PC-9 (cell line): ENCODE measurements at regions of chr12 and their contacts with region 1.

Region 1: DNA sequence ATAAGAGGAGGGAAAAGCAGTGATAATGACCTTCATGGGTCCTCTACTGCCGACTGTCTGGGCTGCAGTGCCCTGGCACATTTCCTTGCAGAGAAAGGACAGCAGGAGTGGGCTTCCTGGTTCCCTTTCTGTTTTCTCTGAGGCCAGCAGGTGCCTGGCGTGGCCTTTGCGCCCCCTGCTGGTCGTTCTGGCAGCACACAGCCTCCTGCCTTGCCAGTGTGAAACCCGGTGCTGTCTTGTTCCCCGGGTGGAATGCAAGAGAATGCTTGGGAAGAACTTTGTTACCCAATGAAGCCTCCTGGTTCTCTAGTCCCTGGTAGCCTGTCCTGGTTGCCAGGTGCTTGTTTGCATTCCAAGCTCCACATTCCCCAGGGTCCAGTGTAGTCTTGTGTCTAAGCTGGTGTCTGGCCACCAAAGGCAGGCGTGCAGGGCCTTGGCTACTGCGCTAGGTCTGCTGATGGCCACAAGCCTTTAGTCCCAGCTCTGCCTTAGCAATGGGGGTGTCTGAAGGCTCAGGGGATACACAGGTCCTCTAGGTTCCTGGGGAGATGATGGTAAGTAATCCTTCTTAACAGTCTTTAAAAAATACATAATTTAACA is 1392.4 kb upstream of the TMEM132C start:
- DNase-seq: peak in 1 of 2 experiments; percentile 41
- H3K4me3 ChIP-seq: no peak overlapping the region
- H3K27ac ChIP-seq: no peak overlapping the region
- H3K4me1 ChIP-seq: no peaks in the 10 kb centered on the region
- H3K27me3 ChIP-seq: peaks cover 10% of the 10 kb centered on the region
- CTCF ChIP-seq: peak; percentile 84

Region 2: DNA sequence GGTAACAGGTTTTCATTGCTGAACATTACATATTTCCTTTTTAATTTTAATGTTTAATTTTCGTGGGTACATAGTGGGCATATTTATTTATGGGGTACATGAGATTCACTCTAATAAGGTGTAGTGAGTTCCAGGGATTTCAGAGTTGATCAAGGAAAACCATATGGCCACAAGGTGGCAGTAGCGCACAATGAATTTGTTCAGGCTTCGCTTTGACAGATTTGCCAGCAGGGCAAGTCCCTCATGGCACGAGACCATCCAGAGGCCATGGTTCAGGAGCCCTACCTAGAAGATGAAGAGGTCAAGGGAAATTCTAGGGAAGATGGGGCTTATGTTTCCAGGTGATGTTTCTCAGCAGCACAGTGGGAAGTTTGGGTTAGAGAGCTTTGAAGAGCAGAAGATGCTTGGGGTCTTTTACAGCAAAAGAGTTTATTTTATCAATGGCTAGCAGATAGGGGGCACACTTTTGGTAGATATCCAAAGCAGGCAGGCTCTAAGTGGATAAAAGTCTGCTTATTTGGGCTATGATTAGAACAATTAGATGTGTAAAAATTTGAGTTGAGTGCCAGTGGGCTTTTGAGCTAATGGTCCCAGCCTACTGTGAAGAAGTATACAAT is 804.9 kb before region 1 on chr12:
- CTCF ChIA-PET with region 1: no interaction called
- POLR2A ChIA-PET with region 1: no interaction called
- intact Hi-C with region 1: loop called (anchors 1 kb)
- DNase-seq: peak in 1 of 2 experiments; percentile 60
- H3K4me3 ChIP-seq: no peak overlapping the region
- H3K27ac ChIP-seq: no peak overlapping the region
- H3K4me1 ChIP-seq: no peaks in the 10 kb centered on the region
- H3K27me3 ChIP-seq: no peaks in the 10 kb centered on the region
- CTCF ChIP-seq: peak; percentile 83

Region 3: GRCh38 chr12:127450826-127451225 is 576.3 kb after region 1 on chr12:
- CTCF ChIA-PET with region 1: no interaction called
- POLR2A ChIA-PET with region 1: no interaction called
- intact Hi-C with region 1: no loop called
- DNase-seq: no peak
- H3K4me3 ChIP-seq: no peak overlapping the region
- H3K27ac ChIP-seq: no peak overlapping the region
- H3K4me1 ChIP-seq: no peaks in the 10 kb centered on the region
- H3K27me3 ChIP-seq: peaks cover 10% of the 10 kb centered on the region; the same call in 1 of the 2 replicates
- CTCF ChIP-seq: no peak